MCF 10A (cell line): ENCODE measurements at regions of chr1 and their contacts with region 1.

Region 1: GRCh38 chr1:208807446-208808127 is 563.4 kb upstream of the PLXNA2 start:
- DNase-seq: peak; percentile 96
- H3K4me3 Mint-ChIP-seq: no peak overlapping the region
- H3K27ac Mint-ChIP-seq: peak overlapping the region; percentile 91
- H3K4me1 Mint-ChIP-seq: peaks cover 37% of the 10 kb centered on the region
- H3K27me3 Mint-ChIP-seq: no peaks in the 10 kb centered on the region
- CTCF ChIP-seq: no peak

Region 2: GRCh38 chr1:208528578-208529240 is 278.9 kb before region 1 on chr1:
- CTCF ChIA-PET with region 1: no interaction called
- POLR2A ChIA-PET with region 1: no interaction called
- intact Hi-C with region 1: loop called (anchors 10 kb)
- DNase-seq: no peak
- H3K4me3 Mint-ChIP-seq: no peak overlapping the region
- H3K27ac Mint-ChIP-seq: no peak overlapping the region
- H3K4me1 Mint-ChIP-seq: peaks cover 5% of the 10 kb centered on the region
- H3K27me3 Mint-ChIP-seq: no peaks in the 10 kb centered on the region
- CTCF ChIP-seq: no peak

Region 3: GRCh38 chr1:208880433-208881100 is 73.0 kb after region 1 on chr1:
- CTCF ChIA-PET with region 1: no interaction called
- POLR2A ChIA-PET with region 1: interaction called, 21 read pairs
- intact Hi-C with region 1: no loop called
- DNase-seq: peak; percentile 96
- H3K4me3 Mint-ChIP-seq: no peak overlapping the region
- H3K27ac Mint-ChIP-seq: peak overlapping the region; percentile 33
- H3K4me1 Mint-ChIP-seq: peaks cover 39% of the 10 kb centered on the region
- H3K27me3 Mint-ChIP-seq: no peaks in the 10 kb centered on the region
- CTCF ChIP-seq: no peak

Region 4: DNA sequence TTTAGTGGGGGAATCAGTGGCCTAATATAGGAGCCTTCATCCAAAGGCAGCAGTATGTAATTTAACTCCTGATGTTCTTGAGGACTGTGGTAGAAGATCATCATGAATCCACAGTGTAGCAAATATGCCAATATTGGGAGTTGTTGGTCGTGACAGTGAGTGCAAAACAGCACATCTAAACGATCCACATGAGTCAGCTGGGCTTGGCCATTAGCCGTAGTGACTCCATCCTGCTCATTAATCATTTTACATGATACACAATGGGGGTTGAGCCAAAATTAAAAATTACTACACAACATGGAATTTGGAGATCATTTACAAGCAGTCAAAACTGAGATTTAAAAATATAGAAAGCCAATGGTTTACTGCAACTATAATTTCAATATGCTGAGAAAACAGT is 122.0 kb after region 1 on chr1:
- CTCF ChIA-PET with region 1: no interaction called
- POLR2A ChIA-PET with region 1: interaction called, 5 read pairs
- intact Hi-C with region 1: loop called (anchors 1 kb)
- DNase-seq: peak; percentile 64
- H3K4me3 Mint-ChIP-seq: no peak overlapping the region
- H3K27ac Mint-ChIP-seq: no peak overlapping the region
- H3K4me1 Mint-ChIP-seq: peaks cover 10% of the 10 kb centered on the region
- H3K27me3 Mint-ChIP-seq: no peaks in the 10 kb centered on the region
- CTCF ChIP-seq: no peak

Region 5: GRCh38 chr1:208988811-208989222 is 181.2 kb after region 1 on chr1:
- CTCF ChIA-PET with region 1: interaction called, 8 read pairs
- POLR2A ChIA-PET with region 1: interaction called, 8 read pairs
- intact Hi-C with region 1: loop called (anchors 5 kb)
- DNase-seq: peak; percentile 90
- H3K4me3 Mint-ChIP-seq: peak overlapping the region; percentile 57
- H3K27ac Mint-ChIP-seq: peak overlapping the region; percentile 62
- H3K4me1 Mint-ChIP-seq: peaks cover 39% of the 10 kb centered on the region
- H3K27me3 Mint-ChIP-seq: no peaks in the 10 kb centered on the region
- CTCF ChIP-seq: no peak